ENCODE measurements at regions of chr17 and their contacts with region 1.

Region 1: GRCh38 chr17:53313746-53314145 is 509.0 kb upstream of the KIF2B start:
- DNase-seq: no peak
- ATAC-seq: no peak
- H3K4me3 ChIP-seq: no peak overlapping the region
- H3K27ac ChIP-seq: no peak overlapping the region
- H3K4me1 ChIP-seq: no peaks in the 10 kb centered on the region
- H3K27me3 ChIP-seq: no peaks in the 10 kb centered on the region
- CTCF ChIP-seq: no peak

Region 2: DNA sequence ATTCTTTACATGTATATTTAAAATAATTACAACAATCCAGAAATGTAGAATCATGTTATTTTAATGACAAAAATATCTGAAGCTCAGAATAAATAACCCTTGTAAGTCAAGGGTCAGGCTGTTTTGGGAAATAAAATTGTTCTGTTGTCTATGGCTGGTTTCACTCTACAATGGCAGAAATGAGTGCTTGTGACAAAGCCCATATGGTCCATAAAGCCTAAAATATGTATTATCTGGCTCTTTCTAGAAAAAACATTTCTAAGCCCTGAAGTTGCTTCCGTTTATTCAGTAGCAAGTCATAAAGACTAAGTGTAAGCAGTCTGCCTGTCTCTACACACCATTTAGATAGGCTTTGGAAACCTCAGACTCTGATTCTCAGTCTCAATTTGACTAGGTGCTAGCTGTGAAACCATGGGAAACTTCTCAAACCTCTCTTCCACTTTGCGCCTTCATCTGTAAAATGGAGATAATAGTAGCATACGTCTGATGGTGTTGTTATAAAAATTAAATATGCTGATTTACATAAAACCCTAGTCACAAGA is 789.6 kb before region 1 on chr17:
- CTCF ChIA-PET with region 1: no interaction called
- POLR2A ChIA-PET with region 1: no interaction called
- in situ Hi-C with region 1: no loop called
- intact Hi-C with region 1: no loop called
- DNase-seq: no peak
- ATAC-seq: no peak
- H3K4me3 ChIP-seq: no peak overlapping the region
- H3K27ac ChIP-seq: no peak overlapping the region
- H3K4me1 ChIP-seq: no peaks in the 10 kb centered on the region
- H3K27me3 ChIP-seq: no peaks in the 10 kb centered on the region
- CTCF ChIP-seq: no peak

Region 3: DNA sequence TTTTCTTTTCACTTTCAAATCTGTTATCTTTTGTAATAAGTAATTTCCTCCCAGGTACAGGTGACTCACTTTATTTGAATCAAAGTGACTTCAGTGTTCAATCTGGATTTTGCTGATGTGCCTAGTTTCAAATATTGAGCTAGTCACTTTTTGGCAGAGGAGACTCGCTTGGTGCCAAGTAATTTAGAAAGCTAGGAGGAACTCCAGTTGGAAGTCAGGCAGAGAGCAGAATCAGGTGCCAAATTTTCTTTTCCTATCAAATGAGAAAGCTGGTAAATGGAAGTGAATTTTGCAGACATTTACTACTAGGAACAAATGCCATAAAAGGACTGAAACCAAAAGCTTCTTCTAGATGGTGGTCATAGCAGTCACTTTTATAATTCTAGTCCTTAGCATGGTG is 147.0 kb before region 1 on chr17:
- CTCF ChIA-PET with region 1: no interaction called
- POLR2A ChIA-PET with region 1: no interaction called
- in situ Hi-C with region 1: no loop called
- intact Hi-C with region 1: no loop called
- DNase-seq: no peak
- ATAC-seq: no peak
- H3K4me3 ChIP-seq: no peak overlapping the region
- H3K27ac ChIP-seq: no peak overlapping the region
- H3K4me1 ChIP-seq: no peaks in the 10 kb centered on the region
- H3K27me3 ChIP-seq: no peaks in the 10 kb centered on the region
- CTCF ChIP-seq: no peak

Region 4: GRCh38 chr17:53249036-53249435 is 64.7 kb before region 1 on chr17:
- CTCF ChIA-PET with region 1: no interaction called
- POLR2A ChIA-PET with region 1: no interaction called
- in situ Hi-C with region 1: no loop called
- intact Hi-C with region 1: loop called (anchors 10 kb)
- DNase-seq: no peak
- ATAC-seq: no peak
- H3K4me3 ChIP-seq: no peak overlapping the region
- H3K27ac ChIP-seq: no peak overlapping the region
- H3K4me1 ChIP-seq: no peaks in the 10 kb centered on the region
- H3K27me3 ChIP-seq: no peaks in the 10 kb centered on the region
- CTCF ChIP-seq: no peak

Measured in Panc1 (cell line).